Calu3 (cell line): ENCODE measurements at regions of chr16 and their contacts with region 1.

Region 1: DNA sequence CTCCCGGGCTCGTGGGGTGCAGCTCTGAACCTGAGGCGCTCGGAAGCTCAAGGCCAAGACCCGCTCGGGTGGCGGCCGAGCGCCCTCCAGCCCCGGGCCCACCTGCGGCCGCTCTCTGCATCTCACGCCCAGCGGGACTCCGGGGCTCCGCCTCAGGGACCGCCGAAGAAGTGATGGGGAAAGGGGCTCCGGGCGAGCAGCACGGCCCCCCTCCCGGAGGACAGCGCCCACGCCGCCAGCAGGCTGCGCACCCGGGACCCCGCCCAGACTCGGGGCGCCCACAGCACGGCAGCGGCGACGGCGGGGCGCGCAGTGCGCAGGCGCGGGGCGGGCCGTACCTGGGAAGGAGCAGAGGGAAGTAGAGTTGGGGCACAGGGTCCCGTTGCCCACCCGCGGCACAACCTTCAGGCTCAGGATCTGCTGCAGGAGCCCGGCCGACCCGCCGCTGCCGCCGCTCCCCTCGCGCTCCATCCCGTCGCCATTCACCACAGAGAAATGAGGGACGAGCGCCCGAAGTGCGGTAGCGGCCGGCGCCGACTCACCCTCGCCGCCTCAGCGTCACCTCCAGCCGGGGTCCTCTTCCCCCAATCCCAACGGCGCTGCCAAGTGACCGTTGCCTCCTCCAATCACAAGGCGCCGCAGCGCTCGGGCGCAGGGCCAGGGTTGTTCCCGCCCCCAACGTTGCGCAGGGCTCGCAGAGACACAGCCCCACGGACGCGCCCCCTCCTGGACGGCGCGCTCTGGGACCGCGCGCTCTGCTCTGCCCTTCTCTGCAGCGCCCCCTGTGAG is at the start of gene TMEM170A:
- DNase-seq: peak; percentile 100
- H3K4me3 Mint-ChIP-seq: peak within 1 kb of the TSS; percentile 93
- H3K27ac Mint-ChIP-seq: peak within 1 kb of the TSS; percentile 83
- H3K4me1 Mint-ChIP-seq: peaks cover 45% of the 10 kb centered on the region
- H3K27me3 Mint-ChIP-seq: no peaks in the 10 kb centered on the region
- CTCF ChIP-seq: peak; percentile 100
- total RNA-seq, gene TMEM170A: 48.4 and 52.5 TPM in 2 replicates

Region 2: GRCh38 chr16:75446416-75446815 is 17.9 kb before region 1 on chr16:
- CTCF ChIA-PET with region 1: no interaction called
- intact Hi-C with region 1: loop called (anchors 1 kb)
- DNase-seq: no peak
- H3K4me3 Mint-ChIP-seq: no peak overlapping the region
- H3K27ac Mint-ChIP-seq: no peak overlapping the region
- H3K4me1 Mint-ChIP-seq: peaks cover 10% of the 10 kb centered on the region
- H3K27me3 Mint-ChIP-seq: no peaks in the 10 kb centered on the region
- CTCF ChIP-seq: no peak

Region 3: DNA sequence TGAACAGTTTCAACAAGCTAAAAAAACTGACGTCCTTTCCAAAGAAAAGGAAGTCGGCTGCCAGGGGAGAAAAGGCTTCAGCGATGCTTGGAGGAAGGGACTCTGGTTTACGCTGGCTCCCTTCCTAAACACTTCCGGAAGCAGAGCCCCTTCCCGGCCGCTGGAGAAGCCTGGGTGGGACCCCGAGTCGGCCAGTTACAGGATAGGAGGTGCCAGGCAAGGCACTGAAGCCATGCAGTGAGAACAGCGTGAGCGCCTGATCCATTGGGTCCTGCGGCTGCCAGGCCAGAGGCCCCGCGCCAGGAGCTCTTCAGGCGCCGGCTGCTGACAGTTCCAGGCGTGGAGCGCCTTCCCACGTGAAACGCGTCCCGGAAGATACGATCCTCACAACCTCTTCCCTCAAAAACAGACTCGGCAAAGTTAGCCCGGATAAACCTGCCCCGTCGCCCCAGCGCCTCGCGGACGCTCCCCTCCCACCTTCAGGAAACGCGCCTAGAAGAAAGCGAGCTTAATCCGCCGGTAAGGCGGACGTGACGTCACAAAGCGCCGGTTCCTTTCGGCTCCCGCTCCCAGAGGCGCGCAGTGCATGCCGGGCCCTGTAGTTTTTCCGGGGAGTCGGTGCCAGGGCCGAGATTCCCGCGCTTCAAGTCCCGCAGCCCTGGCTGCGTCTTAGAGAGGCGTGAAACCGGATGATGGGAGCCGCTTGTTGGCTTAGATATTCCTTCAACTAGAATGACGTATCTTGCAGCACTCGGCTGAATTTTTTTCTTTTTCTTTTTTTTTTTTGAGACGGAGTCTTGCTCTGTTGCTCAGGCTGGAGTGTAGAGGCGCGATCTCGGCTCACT is 158.7 kb after region 1 on chr16 and contains the start of gene ADAT1:
- CTCF ChIA-PET with region 1: no interaction called
- intact Hi-C with region 1: loop called (anchors 5 kb)
- DNase-seq: peak; percentile 98
- H3K4me3 Mint-ChIP-seq: peak within 1 kb of the TSS; percentile 90
- H3K27ac Mint-ChIP-seq: peak within 1 kb of the TSS; percentile 92
- H3K4me1 Mint-ChIP-seq: peaks cover 16% of the 10 kb centered on the region
- H3K27me3 Mint-ChIP-seq: no peaks in the 10 kb centered on the region
- CTCF ChIP-seq: no peak
- total RNA-seq, gene ADAT1: 90.4 and 111 TPM in 2 replicates